ENCODE measurements at regions of chr12 and their contacts with region 1.

Region 1: DNA sequence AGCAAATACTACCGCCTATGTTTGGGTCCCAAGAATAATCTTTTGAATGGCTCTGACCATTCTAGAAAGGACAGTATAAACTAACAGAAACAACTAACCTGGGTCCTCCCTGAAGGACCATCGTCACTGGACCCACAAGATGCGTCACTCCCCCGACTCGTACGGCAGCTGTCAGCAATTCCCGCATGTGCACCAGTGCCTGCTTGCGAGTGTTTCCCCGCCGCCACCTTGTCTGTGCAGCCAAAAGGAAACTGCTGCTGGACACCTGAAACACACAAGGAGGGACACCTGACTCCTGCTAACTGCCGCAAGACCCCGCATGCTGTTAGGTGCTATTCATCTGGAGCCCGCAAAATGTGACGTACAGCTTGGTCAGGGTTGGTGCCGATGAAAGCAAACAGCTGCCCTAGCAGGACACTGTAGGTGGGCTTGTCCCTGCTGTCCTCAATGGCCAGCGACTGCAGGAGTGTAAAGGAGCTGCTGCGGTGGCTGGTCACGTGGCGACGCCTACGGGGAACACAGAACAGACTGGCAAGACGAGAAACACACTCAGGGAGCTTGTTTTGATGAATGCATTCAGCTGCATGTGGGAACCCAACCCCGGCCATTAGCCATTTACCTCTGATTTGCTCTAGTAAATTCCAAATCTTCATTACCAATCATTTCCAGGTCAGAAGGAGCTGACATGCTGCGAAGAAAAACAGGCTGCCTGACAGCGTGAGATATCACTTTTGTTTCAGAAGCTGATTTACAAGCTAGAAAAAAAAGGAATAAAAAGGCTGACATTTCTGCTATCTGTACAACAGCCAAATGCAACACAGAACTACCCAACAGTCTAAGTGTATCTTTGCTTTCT is 118.1 kb downstream of the TRAFD1 start:
- DNase-seq: no peak
- ATAC-seq: no peak
- H3K4me3 ChIP-seq: no peak overlapping the region
- H3K27ac ChIP-seq: no peak overlapping the region
- H3K4me1 ChIP-seq: no peaks in the 10 kb centered on the region
- H3K27me3 ChIP-seq: no peaks in the 10 kb centered on the region
- CTCF ChIP-seq: no peak

Region 2: GRCh38 chr12:111170543-111170942 is 1072.9 kb before region 1 on chr12:
- intact Hi-C with region 1: no loop called
- DNase-seq: no peak
- ATAC-seq: no peak
- H3K4me3 ChIP-seq: no peak overlapping the region
- H3K27ac ChIP-seq: no peak overlapping the region
- H3K4me1 ChIP-seq: peaks cover 3% of the 10 kb centered on the region
- H3K27me3 ChIP-seq: peaks cover 0 to 7% (median 2%) of the 10 kb centered on the region in 3 donors
- CTCF ChIP-seq: no peak

Region 3: DNA sequence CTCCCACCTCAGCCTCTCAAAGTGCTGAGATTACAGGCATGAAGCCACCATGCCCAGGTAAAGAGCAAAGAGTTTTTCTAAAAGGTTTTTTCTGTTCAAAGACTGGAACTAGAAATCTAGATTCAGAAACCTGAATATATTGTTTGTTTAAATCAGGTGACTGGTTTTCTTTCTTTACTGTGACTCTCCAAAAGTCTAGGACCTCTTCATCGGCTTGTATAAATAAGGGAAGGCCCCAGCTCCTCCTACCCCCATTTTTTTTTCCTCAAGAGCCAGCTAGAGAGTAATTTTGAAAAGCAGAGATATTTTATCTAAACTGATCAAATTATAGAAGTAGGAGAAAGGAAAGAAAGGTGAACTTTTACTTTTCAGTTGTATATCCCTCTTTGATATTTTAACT is 278.5 kb before region 1 on chr12:
- intact Hi-C with region 1: no loop called
- DNase-seq: no peak
- ATAC-seq: no peak
- H3K4me3 ChIP-seq: no peak overlapping the region
- H3K27ac ChIP-seq: no peak overlapping the region
- H3K4me1 ChIP-seq: no peaks in the 10 kb centered on the region
- H3K27me3 ChIP-seq: no peaks in the 10 kb centered on the region
- CTCF ChIP-seq: no peak

Region 4: DNA sequence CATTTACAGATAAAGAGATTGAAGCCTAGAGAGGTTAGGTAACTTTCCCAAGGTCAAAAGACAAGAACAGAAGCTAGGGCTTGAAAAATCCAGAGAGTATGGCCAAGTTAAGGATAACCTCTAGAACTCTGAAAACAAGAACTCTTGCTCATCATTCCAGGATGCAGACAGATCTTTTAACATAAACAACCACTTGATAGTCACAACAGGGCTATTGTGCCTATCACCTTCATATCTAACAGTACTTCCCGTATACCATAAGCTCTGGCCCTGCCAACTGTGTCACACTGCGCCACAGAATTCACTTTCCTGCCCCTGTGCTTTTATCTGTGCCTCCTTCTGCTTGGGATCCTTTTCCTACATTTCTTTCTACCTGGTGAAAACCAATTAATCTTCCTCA is 212.0 kb before region 1 on chr12:
- intact Hi-C with region 1: loop called in 1 of 2 experiments (anchors 10 kb)
- DNase-seq: no peak
- ATAC-seq: no peak
- H3K4me3 ChIP-seq: no peak overlapping the region
- H3K27ac ChIP-seq: no peak overlapping the region
- H3K4me1 ChIP-seq: no peaks in the 10 kb centered on the region
- H3K27me3 ChIP-seq: no peaks in the 10 kb centered on the region
- CTCF ChIP-seq: no peak

Region 5: DNA sequence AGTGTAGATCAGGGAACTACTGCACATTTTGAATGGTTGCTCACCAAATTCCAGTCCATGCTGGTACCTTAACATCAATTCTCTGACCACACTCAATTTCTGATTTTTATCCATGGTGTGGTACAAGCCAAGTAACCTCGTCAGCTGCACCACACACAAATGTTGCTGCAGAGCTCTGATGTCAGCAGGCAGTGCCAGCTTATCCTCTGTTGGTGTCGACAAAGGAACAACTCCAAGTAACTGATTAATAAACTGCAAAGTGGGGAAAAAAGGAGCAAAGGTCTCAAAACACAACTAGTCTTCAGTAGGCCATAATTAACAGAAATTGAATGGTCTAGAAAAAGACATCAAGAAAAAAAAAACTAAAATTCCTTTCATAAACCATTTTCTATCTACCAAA is 182.3 kb before region 1 on chr12:
- intact Hi-C with region 1: loop called in 1 of 2 experiments (anchors 10 kb)
- DNase-seq: no peak
- ATAC-seq: no peak
- H3K4me3 ChIP-seq: no peak overlapping the region
- H3K27ac ChIP-seq: no peak overlapping the region
- H3K4me1 ChIP-seq: no peaks in the 10 kb centered on the region
- H3K27me3 ChIP-seq: no peaks in the 10 kb centered on the region
- CTCF ChIP-seq: no peak

Region 6: DNA sequence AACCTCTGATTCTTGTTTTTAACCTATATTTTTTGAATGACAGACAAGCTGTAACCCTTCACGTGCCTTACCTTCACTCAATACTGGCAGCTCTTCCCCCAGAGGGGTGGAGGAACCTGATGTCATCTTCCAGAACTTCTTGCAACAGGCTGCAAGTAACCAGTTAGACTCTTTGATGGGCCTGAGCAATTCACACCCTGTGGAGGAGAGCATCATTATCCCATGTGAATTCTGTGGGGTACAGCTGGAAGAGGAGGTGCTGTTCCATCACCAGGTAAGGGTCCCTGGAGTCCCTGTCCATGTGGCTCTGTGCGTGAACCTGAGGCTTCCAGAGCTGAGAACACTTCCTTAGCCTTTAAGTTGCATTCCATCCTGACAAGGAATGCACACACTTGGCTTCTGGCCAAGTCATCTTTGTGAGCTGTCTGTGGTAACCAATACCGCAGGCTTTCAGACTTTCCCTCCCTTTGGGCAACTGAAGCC is 95.4 kb before region 1 on chr12:
- intact Hi-C with region 1: loop called in 1 of 2 experiments (anchors 10 kb)
- DNase-seq: no peak
- ATAC-seq: no peak
- H3K4me3 ChIP-seq: no peak overlapping the region
- H3K27ac ChIP-seq: no peak overlapping the region
- H3K4me1 ChIP-seq: no peaks in the 10 kb centered on the region
- H3K27me3 ChIP-seq: no peaks in the 10 kb centered on the region
- CTCF ChIP-seq: no peak

Region 7: DNA sequence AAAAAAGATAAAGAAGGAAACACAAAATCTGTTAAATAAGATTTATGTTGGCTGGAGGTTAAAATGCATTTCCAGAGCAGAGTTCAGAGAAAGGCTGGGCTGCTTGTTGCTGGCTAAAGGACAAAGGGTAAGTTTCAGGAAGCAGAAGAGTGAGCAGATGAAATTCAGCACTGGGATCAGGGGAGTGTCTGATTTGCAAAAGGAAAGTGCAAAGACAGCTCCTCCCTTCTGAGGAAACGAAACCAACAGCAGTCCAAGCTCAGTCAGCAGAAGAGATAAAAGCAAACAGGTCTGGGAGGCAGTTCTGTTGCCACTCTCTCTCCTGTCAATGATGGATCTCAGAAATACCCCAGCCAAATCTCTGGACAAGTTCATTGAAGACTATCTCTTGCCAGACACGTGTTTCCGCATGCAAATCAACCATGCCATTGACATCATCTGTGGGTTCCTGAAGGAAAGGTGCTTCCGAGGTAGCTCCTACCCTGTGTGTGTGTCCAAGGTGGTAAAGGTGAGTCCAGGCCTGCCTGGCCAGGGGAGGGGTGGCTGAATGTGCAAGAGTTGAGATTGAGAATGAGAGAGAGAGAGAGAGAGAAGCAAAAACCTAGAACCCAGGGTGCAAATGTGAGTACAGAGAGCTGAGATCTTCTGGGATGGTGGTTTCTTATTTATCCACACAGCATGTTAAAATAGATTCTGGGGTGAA is 663.4 kb after region 1 on chr12 and contains the start of gene OAS1:
- intact Hi-C with region 1: no loop called
- DNase-seq: no peak
- ATAC-seq: peak in 3 of 4 donors; percentile 51 to 70 (median 56)
- H3K4me3 ChIP-seq: peak within 1 kb of the TSS; percentile 61
- H3K27ac ChIP-seq: no peak within 1 kb of the TSS
- H3K4me1 ChIP-seq: no peaks in the 10 kb centered on the region
- H3K27me3 ChIP-seq: no peaks in the 10 kb centered on the region
- CTCF ChIP-seq: no peak
- total RNA-seq, gene OAS1: 1.8 to 3.7 (median 2.6) TPM